Posterior cingulate gyrus (tissue), 11 donors: ENCODE measurements at regions of chr1 and their contacts with region 1.

Region 1: GRCh38 chr1:169348383-169349036 is 19.1 kb downstream of the NME7 start:
- DNase-seq: no peak

Region 2: GRCh38 chr1:168439456-168440375 is 908.8 kb before region 1 on chr1:
- intact Hi-C with region 1: loop called (anchors 10 kb)
- DNase-seq: peak; percentile 60 to 96 (median 77)

Region 3: GRCh38 chr1:168603501-168604110 is 744.9 kb before region 1 on chr1:
- intact Hi-C with region 1: loop called (anchors 1 kb)
- DNase-seq: peak; percentile 69 to 97 (median 84)

Region 4: DNA sequence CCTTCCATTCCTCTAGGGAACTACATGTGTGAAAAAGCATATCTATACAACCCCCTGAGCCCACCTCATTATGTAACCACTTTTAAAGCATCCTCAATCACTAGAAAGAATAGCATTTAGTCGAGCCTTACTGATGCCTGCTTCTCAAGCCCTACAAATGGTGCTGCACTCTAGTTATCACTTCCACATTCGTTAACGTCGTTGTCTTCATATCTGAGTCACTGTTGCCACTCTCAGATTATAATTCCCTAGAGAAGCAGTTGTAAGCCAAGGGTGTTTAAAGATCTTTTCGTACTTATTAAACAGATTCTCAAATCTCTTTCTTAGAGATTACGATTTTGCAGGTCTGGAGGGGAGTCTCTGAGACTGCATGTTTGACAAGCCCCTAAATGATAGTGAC is 225.5 kb before region 1 on chr1:
- intact Hi-C with region 1: loop called (anchors 10 kb)
- DNase-seq: no peak

Region 5: GRCh38 chr1:169217636-169218035 is 130.9 kb before region 1 on chr1:
- intact Hi-C with region 1: no loop called
- DNase-seq: no peak

Region 6: DNA sequence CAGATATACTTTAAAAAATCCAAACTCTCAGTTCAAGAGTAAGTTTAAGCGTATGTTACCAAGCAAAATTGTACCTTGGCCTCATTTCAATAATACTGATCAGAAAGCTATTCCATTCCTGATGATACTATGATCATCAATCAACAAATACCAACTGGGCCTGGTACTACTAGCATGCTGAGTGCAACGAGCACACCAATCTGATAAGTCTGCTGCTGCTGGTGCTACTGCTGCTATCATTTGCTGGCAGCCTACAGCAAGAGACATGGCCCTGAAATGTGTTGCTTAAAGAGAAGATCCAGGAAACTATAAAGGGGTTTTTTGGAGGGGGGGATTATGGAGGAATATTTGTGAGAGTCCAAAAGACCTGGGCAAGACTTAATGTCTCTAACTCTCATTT is 20.6 kb before region 1 on chr1:
- intact Hi-C with region 1: no loop called
- DNase-seq: no peak